ENCODE measurements at regions of chr6 and their contacts with region 1.

Region 1: GRCh38 chr6:14210663-14211561 is 93.3 kb downstream of the CD83 start:
- DNase-seq: peak; percentile 93
- H3K4me3 Mint-ChIP-seq: peak overlapping the region; percentile 82
- H3K27ac Mint-ChIP-seq: peak overlapping the region; percentile 85
- H3K4me1 Mint-ChIP-seq: peaks cover 18% of the 10 kb centered on the region
- H3K27me3 Mint-ChIP-seq: peaks cover 19% of the 10 kb centered on the region

Region 2: GRCh38 chr6:14200047-14200446 is 10.9 kb before region 1 on chr6:
- CTCF ChIA-PET with region 1: no interaction called
- DNase-seq: no peak
- H3K4me3 Mint-ChIP-seq: no peak overlapping the region
- H3K27ac Mint-ChIP-seq: no peak overlapping the region
- H3K4me1 Mint-ChIP-seq: no peaks in the 10 kb centered on the region
- H3K27me3 Mint-ChIP-seq: peaks cover 4% of the 10 kb centered on the region

Region 3: DNA sequence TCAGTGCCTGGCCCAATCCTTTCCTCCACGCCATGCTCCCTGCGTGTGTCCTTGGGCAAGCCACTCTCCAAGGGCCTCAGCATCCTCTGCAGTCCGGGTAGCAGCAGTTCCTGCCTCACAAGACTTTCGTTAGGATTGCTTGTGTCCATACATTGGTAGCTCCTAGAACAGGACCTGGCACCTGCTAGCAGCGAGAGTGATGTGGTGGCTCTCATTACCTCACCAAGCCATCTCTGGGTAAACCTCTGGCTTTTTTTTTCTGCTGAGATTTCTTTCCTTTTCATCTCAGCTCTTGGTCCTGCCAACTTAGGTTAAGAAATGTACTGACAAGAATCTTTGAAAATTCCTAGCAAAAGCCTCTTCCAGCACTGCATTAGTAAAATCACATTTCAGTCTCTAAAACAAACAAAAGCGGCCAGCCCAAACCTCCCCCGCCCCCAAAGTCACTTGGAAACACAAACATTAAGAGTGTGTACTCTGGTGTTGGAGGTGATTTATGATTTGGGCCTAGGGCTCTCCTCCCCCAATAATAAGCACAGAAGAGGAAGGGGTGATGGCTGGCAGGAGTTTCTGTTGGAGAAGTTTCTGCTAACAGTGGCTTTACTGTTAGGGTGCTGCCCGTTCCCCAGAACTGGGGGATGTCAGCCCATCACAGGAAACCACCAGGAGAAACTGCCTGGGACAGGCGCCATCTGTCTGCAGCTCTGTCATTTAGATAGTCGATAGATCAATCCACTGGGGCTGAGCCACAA is 105.9 kb after region 1 on chr6:
- CTCF ChIA-PET with region 1: interaction called, 11 read pairs
- DNase-seq: peak; percentile 34
- H3K4me3 Mint-ChIP-seq: no peak overlapping the region
- H3K27ac Mint-ChIP-seq: no peak overlapping the region
- H3K4me1 Mint-ChIP-seq: peaks cover 9% of the 10 kb centered on the region
- H3K27me3 Mint-ChIP-seq: peaks cover 6% of the 10 kb centered on the region

Region 4: GRCh38 chr6:14711056-14711703 is 500.3 kb after region 1 on chr6:
- CTCF ChIA-PET with region 1: interaction called, 16 read pairs
- DNase-seq: peak; percentile 75
- H3K4me3 Mint-ChIP-seq: no peak overlapping the region
- H3K27ac Mint-ChIP-seq: no peak overlapping the region
- H3K4me1 Mint-ChIP-seq: peaks cover 9% of the 10 kb centered on the region
- H3K27me3 Mint-ChIP-seq: peaks cover 6% of the 10 kb centered on the region

Measured in activated naive CD4-positive, alpha-beta T cell treated with anti-CD3 and anti-CD28 coated beads, Interleukin-2, amount 10 ng/mL, durations not matched to agents 7 days and 5 days (primary cell).